ENCODE measurements at regions of chr11 and their contacts with region 1.

Region 1: GRCh38 chr11:125941619-125942611 is 3.9 kb upstream of the VSIG10L2 start:
- DNase-seq: peak; percentile 70 to 78
- H3K4me3 ChIP-seq: no peak overlapping the region
- H3K27ac ChIP-seq: no peak overlapping the region
- H3K4me1 ChIP-seq: peaks cover 0 to 6% (median 3%) of the 10 kb centered on the region in 4 donors
- H3K27me3 ChIP-seq: peaks cover 0 to 17% (median 0%) of the 10 kb centered on the region in 3 donors
- CTCF ChIP-seq: peak in 4 of 7 experiments; percentile 33 to 68 (median 58)
- EP300 ChIP-seq: no peak
- POLR2A ChIP-seq: no peak

Region 2: DNA sequence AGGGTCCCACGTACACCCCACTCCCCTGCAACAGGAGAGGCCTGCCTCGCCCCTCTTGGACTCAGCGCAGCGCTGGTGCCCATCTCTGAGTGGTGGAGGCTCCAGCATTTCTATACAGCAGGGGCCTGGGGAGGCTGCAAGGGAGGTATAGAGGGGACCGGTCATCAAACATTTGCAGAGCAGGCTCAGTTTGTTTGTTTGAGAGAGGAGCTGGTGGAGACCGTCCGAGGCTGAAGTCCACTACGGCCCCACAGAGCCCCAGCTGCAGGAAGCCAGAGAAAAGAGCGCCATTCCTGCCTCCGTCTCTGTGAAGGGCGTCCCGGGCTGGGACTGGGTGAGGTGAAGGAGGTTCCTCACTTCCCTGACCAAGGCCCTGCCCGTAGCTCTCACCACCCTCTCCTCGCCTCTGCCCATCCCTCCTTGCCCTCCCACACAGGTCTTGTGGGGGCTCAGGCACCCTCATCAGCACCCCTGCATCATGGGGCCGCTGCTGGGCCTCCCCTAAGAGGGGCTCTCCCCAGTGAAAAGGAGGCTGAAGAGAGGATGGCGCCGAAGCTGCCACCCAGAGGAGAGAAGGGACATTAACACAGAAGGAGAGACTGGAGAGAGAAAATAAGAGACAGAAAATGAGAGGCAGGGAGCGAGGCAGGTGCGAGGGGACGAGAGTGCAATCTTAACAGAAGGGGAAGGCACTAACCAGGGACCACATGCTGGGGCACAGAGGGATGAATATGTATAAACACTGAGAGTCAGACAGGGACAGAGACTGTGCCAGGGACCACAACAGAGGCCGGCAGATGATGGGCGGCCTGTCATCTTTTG is 245.0 kb after region 1 on chr11:
- intact Hi-C with region 1: loop called (anchors 5 kb)
- DNase-seq: no peak
- H3K4me3 ChIP-seq: no peak overlapping the region
- H3K27ac ChIP-seq: no peak overlapping the region
- H3K4me1 ChIP-seq: peaks cover 0 to 2% (median 0%) of the 10 kb centered on the region in 4 donors
- H3K27me3 ChIP-seq: no peaks in the 10 kb centered on the region
- CTCF ChIP-seq: no peak
- EP300 ChIP-seq: no peak
- POLR2A ChIP-seq: no peak

Region 3: GRCh38 chr11:126194121-126194543 is 252.2 kb after region 1 on chr11:
- intact Hi-C with region 1: loop called (anchors 5 kb)
- DNase-seq: peak; percentile 34 to 81
- H3K4me3 ChIP-seq: no peak overlapping the region
- H3K27ac ChIP-seq: no peak overlapping the region
- H3K4me1 ChIP-seq: peaks cover 0 to 17% (median 3%) of the 10 kb centered on the region in 4 donors
- H3K27me3 ChIP-seq: no peaks in the 10 kb centered on the region
- CTCF ChIP-seq: peak in 5 of 7 experiments; percentile 47 to 78 (median 64)
- EP300 ChIP-seq: no peak
- POLR2A ChIP-seq: no peak

Measured in stomach (tissue), 19 donors.